ENCODE measurements at regions of chr4 and their contacts with region 1.

Region 1: GRCh38 chr4:51895813-51896408 is 53.0 kb downstream of the DCUN1D4 start:
- DNase-seq: peak; percentile 51
- H3K4me3 ChIP-seq: no peak overlapping the region
- H3K27ac ChIP-seq: no peak overlapping the region
- H3K4me1 ChIP-seq: no peaks in the 10 kb centered on the region
- H3K27me3 ChIP-seq: no peaks in the 10 kb centered on the region
- CTCF ChIP-seq: peak; percentile 45 to 58 (median 52)
- POLR2A ChIP-seq: no peak

Region 2: DNA sequence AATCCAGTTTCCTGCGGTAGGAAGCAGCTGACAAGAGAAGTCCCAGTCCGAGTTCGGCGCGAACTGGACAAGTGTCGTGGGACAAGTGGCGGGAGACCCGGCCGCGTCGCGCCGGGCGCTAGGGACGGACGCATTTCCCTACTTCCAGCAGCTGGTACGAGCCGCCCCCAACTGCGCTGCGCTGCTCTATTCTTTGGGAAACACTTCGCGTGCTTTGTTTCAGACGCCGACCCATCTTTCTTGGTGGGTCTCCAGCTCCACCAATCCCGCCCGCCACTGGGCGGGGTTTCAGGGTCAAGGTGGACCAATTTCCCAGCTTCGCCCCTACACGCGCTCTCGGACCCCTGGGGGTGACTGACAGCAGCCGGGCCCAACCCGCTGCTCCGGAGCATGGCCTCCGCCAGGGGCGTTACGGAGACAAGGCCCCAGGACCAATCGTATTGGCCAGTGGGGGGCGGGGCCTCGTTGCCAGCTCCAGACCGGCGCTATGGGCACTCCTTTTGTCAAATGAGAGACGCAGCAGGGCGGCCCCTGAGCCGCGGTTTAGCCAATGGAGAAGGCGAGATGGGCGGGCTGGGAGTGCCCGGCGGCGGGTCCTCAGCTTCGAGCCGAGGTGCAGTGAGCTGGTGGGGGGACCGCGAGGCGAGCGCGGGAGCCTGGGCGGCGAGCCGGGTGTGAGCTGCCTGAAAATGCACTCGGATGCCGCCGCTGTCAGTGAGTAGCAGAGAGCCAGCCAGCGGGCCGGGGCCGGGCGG is 53.2 kb before region 1 on chr4 and contains the start of gene DCUN1D4:
- intact Hi-C with region 1: loop called (anchors 5 kb)
- DNase-seq: peak; percentile 100
- H3K4me3 ChIP-seq: peak within 1 kb of the TSS; percentile 89 to 94
- H3K27ac ChIP-seq: peak within 1 kb of the TSS; percentile 89 to 93
- H3K4me1 ChIP-seq: no peaks in the 10 kb centered on the region
- H3K27me3 ChIP-seq: no peaks in the 10 kb centered on the region
- CTCF ChIP-seq: peak; percentile 52 to 93 (median 75)
- POLR2A ChIP-seq: peak; percentile 78
- total RNA-seq, gene DCUN1D4: 23.0 to 49.1 TPM

Region 3: GRCh38 chr4:53507671-53508286 is 1611.9 kb after region 1 on chr4:
- intact Hi-C with region 1: no loop called
- DNase-seq: no peak
- H3K4me3 ChIP-seq: no peak overlapping the region
- H3K27ac ChIP-seq: no peak overlapping the region
- H3K4me1 ChIP-seq: no peaks in the 10 kb centered on the region
- H3K27me3 ChIP-seq: no peaks in the 10 kb centered on the region
- CTCF ChIP-seq: no peak
- POLR2A ChIP-seq: no peak